Dorsolateral prefrontal cortex (tissue), 120 donors: ENCODE measurements at regions of chr3 and their contacts with region 1.

Region 1: GRCh38 chr3:69451594-69451993 is 65.7 kb upstream of the FRMD4B start:
- DNase-seq: no peak
- H3K4me3 ChIP-seq: no peak overlapping the region
- H3K27ac ChIP-seq: peak overlapping the region in 12 of 59 donors; percentile 9 to 51 (median 26)
- H3K27me3 ChIP-seq: peaks cover 0 to 9% (median 0%) of the 10 kb centered on the region in 45 donors
- CTCF ChIP-seq: peak in 11 of 56 donors; percentile 8 to 29 (median 16)

Region 2: DNA sequence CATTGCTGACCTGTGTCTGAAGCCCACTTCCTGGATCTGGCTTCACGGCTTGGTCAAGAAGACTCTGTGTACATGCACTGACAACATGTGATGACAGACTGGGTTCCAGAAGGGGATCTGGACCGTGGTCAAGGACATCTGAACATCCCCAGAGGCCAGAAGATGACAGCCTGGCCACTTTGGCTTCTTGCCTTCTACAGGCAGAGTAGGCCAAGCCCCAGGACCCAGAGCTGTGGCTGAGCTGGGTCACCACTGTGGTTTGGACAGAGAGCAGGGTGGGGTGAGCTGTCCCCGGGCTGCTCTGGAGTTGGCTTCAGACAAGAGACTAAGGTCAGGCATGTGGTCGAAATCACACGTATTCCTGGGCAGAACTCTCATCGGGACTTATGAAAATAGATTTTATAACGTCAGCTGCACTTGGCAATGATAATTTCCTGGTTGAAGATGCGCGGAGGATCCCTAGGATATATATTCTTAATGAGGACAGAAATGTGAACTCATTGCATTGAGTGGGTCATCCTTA is 48.4 kb after region 1 on chr3:
- intact Hi-C with region 1: loop called in 1 of 2 experiments (anchors 5 kb)
- DNase-seq: peak in 9 of 10 donors; percentile 31 to 66 (median 52)
- H3K4me3 ChIP-seq: peak overlapping the region in 1 of 59 donors; percentile 12
- H3K27ac ChIP-seq: peak overlapping the region in 38 of 59 donors; percentile 4 to 80 (median 42)
- H3K27me3 ChIP-seq: peaks cover 0 to 3% (median 0%) of the 10 kb centered on the region in 45 donors
- CTCF ChIP-seq: no peak